Activated CD4-positive, alpha-beta T cell treated with anti-CD3 and anti-CD28 coated beads for 36 hours (primary cell): ENCODE measurements at regions of chr16 and their contacts with region 1.

Region 1: GRCh38 chr16:11407047-11407982 is 62.1 kb downstream of the RMI2 start:
- DNase-seq: peak; percentile 81
- ATAC-seq: peak; percentile 74
- H3K4me3 Mint-ChIP-seq: no peak overlapping the region
- H3K27ac Mint-ChIP-seq: no peak overlapping the region
- H3K4me1 Mint-ChIP-seq: no peaks in the 10 kb centered on the region
- H3K27me3 Mint-ChIP-seq: no peaks in the 10 kb centered on the region

Region 2: DNA sequence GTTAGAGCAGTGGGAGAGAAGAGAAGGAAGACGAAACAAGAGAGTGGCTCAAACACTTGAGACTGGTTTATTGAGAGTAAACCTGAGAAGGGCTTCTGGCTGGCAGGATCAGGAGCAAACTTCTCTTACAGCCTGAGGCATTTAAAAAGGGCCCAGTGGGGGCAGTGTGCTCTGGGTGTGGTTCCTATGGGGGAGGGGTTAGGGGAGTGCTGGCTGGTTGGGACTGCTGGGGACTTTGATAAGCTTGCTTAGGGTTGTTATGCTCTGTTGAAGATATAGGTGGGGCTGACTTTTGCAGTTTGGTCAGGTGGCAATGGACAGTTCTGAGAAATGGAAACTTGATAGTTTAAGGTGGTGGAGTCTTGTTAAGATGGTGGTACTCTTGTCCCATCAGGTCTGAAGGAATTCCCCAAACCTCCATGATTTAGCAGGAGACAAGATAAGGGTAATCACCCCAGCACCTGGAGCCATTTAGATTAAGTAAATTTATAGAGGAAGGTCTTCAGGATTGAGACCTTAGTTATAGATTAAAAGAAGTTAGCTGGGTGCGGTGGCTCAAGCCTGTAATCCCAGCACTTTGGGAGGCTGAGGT is 906.2 kb before region 1 on chr16:
- CTCF ChIA-PET with region 1: no interaction called
- POLR2A ChIA-PET with region 1: no interaction called
- intact Hi-C with region 1: no loop called
- DNase-seq: peak; percentile 32
- ATAC-seq: peak; percentile 35
- H3K4me3 Mint-ChIP-seq: no peak overlapping the region
- H3K27ac Mint-ChIP-seq: no peak overlapping the region
- H3K4me1 Mint-ChIP-seq: peaks cover 7% of the 10 kb centered on the region
- H3K27me3 Mint-ChIP-seq: no peaks in the 10 kb centered on the region

Region 3: DNA sequence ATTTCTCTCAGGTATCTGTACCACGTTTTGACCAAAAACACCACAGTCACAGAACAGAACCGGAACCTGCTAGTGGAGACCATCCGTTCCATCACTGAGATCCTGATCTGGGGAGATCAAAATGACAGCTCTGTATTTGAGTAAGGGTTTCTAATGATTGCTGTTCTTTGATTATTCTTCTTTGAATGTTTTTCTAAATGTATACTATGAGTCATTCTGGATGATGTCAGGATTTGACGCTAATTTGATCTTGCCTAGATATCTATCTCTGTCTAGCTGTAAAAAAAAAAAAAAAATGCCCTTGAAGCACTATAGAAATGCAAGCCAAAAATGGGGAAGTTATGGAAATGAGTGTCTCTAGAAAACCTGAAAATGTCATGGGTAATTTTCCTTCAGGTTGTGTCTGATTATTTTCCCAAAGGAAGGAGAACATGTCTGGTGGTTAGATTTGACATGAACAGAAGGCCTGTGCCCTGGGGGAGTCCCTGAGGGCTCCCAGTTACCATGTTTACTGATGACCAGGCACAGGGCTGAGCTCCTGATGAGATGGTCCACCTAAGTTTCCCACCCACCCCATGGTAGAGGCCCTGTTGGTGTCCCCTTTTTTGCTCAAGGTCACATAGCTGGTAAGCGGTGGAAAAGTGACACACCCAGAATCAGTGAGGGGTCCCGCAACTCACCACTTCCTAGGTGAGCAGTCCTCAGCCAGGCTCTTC is 449.4 kb before region 1 on chr16:
- CTCF ChIA-PET with region 1: interaction called, 13 read pairs
- POLR2A ChIA-PET with region 1: no interaction called
- intact Hi-C with region 1: loop called (anchors 2 to 10 kb)
- DNase-seq: peak; percentile 51
- ATAC-seq: peak; percentile 82
- H3K4me3 Mint-ChIP-seq: no peak overlapping the region
- H3K27ac Mint-ChIP-seq: peak overlapping the region; percentile 88
- H3K4me1 Mint-ChIP-seq: peaks cover 68% of the 10 kb centered on the region
- H3K27me3 Mint-ChIP-seq: no peaks in the 10 kb centered on the region

Region 4: DNA sequence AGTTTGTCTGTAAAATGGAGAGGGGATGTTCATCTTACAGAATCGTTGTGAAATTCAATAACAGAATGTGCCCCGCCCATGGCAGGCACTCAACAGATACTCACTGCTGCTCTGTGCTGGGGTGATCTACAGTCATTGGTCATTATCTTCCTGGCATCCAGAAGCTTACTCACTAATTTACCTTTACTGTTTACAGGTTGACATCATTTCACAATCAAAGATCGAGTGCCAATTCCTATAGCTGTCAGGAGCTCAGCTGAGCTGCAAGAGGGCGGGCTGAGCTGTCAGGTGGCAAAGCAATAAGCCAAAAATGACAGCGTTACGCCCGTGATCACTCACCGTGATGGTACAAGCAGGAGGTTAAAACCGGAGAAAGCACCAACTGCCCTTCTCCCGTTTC is 128.2 kb after region 1 on chr16:
- CTCF ChIA-PET with region 1: interaction called, 9 read pairs
- POLR2A ChIA-PET with region 1: no interaction called
- intact Hi-C with region 1: loop called in 1 of 2 experiments (anchors 1 kb)
- DNase-seq: no peak
- ATAC-seq: no peak
- H3K4me3 Mint-ChIP-seq: no peak overlapping the region
- H3K27ac Mint-ChIP-seq: no peak overlapping the region
- H3K4me1 Mint-ChIP-seq: peaks cover 11% of the 10 kb centered on the region
- H3K27me3 Mint-ChIP-seq: no peaks in the 10 kb centered on the region

Region 5: DNA sequence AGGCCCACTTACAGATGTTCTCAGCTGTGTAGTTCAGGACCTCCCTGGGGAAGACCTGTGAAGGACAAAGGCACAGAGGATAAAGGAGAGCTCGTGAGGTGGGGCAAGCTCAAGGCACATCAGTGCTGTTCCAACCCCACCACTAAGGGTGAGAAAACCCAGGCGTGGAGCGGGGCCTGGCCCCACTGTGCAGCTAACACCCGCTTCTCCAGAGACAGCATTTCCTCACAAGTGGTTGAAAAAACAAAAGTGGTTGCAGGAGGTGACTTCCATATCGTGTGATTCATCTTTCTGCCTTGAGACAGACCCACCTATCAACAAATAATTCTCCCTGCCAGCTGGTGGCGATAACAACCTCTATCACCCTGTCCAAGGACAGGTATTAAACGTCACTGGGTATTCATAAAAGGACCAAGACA is 291.0 kb after region 1 on chr16:
- CTCF ChIA-PET with region 1: interaction called, 4 read pairs
- POLR2A ChIA-PET with region 1: no interaction called
- intact Hi-C with region 1: loop called in 1 of 2 experiments (anchors 5 kb)
- DNase-seq: peak; percentile 67
- ATAC-seq: peak; percentile 92
- H3K4me3 Mint-ChIP-seq: no peak overlapping the region
- H3K27ac Mint-ChIP-seq: peak overlapping the region; percentile 76
- H3K4me1 Mint-ChIP-seq: peaks cover 47% of the 10 kb centered on the region
- H3K27me3 Mint-ChIP-seq: no peaks in the 10 kb centered on the region

Region 6: GRCh38 chr16:11816103-11816502 is 408.8 kb after region 1 on chr16:
- CTCF ChIA-PET with region 1: no interaction called
- POLR2A ChIA-PET with region 1: no interaction called
- intact Hi-C with region 1: loop called in 1 of 2 experiments (anchors 1 kb)
- DNase-seq: no peak
- ATAC-seq: no peak
- H3K4me3 Mint-ChIP-seq: no peak overlapping the region
- H3K27ac Mint-ChIP-seq: no peak overlapping the region
- H3K4me1 Mint-ChIP-seq: no peaks in the 10 kb centered on the region
- H3K27me3 Mint-ChIP-seq: no peaks in the 10 kb centered on the region